ENCODE measurements at regions of chr1 and their contacts with region 1.

Region 1: GRCh38 chr1:241531195-241532161 is 700 bp upstream of the KMO start:
- DNase-seq: no peak
- ATAC-seq: peak in 3 of 4 donors; percentile 68 to 87 (median 71)
- H3K4me3 ChIP-seq: peak overlapping the region; percentile 15 to 60 (median 48)
- H3K27ac ChIP-seq: peak overlapping the region in 4 of 12 donors; percentile 9 to 89 (median 38)
- H3K4me1 ChIP-seq: peaks cover 0 to 7% (median 0%) of the 10 kb centered on the region in 12 donors
- H3K27me3 ChIP-seq: peaks cover 0 to 24% (median 0%) of the 10 kb centered on the region in 9 donors
- CTCF ChIP-seq: peak; percentile 45 to 68 (median 62)
- POLR2A ChIP-seq: no peak

Region 2: GRCh38 chr1:241275981-241276380 is 255.5 kb before region 1 on chr1:
- intact Hi-C with region 1: no loop called
- DNase-seq: no peak
- ATAC-seq: no peak
- H3K4me3 ChIP-seq: no peak overlapping the region
- H3K27ac ChIP-seq: no peak overlapping the region
- H3K4me1 ChIP-seq: no peaks in the 10 kb centered on the region
- H3K27me3 ChIP-seq: no peaks in the 10 kb centered on the region
- CTCF ChIP-seq: no peak
- POLR2A ChIP-seq: no peak

Region 3: DNA sequence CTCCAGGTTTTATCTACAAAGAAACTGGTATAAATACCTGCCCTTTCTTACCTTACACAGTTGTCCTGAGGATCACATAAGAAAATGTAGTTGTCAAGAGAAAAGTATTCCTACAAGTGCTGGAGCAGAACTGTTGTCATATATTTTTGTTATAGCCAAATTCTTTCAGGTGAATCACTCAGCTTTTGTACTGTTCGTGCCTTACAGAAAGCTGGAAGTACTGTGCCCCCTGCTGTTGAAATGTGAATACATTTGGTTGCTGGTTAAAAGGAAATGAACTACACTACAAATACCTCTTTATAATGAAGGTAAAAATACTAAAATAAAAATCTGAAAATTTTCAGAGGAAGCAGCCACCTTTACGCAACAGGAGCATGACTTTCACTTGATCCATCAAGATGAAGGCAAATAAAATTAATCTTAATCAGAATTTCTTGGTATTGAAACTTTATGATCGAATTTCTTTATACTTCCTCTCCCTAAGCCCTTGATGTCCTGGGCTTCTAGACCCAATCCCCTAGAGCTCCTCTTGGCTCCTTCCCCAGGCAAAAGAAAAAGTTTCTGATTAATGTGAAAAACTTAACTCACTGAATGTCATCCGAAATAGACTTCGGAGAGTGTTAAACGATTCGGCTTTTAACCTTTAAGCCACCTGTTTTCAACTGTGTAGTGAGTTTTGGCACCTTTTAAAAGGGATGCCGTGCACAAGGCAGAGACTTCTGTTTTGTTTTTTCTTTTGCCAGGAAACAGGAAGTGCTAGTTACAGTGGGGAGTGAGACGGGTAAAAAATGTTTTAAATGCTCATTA is 96.2 kb after region 1 on chr1:
- intact Hi-C with region 1: loop called in 7 of 10 experiments (anchors 2 to 10 kb)
- DNase-seq: no peak
- ATAC-seq: no peak
- H3K4me3 ChIP-seq: no peak overlapping the region
- H3K27ac ChIP-seq: peak overlapping the region in 1 of 12 donors; percentile 21
- H3K4me1 ChIP-seq: peaks cover 0 to 13% (median 4%) of the 10 kb centered on the region in 12 donors
- H3K27me3 ChIP-seq: no peaks in the 10 kb centered on the region
- CTCF ChIP-seq: peak; percentile 28 to 61 (median 45)
- POLR2A ChIP-seq: no peak

Region 4: GRCh38 chr1:241640029-241640818 is 108.7 kb after region 1 on chr1 and contains the starts of genes CHML and OPN3:
- intact Hi-C with region 1: loop called in 1 of 10 experiments (anchors 5 kb)
- DNase-seq: peak; percentile 95 to 98 (median 96)
- ATAC-seq: peak; percentile 99 to 100 (median 100)
- H3K4me3 ChIP-seq: peak within 1 kb of the TSS; percentile 73 to 98 (median 90)
- H3K27ac ChIP-seq: peak within 1 kb of the TSS; percentile 17 to 86 (median 78)
- H3K4me1 ChIP-seq: peaks cover 0 to 35% (median 10%) of the 10 kb centered on the region in 12 donors
- H3K27me3 ChIP-seq: no peaks in the 10 kb centered on the region
- CTCF ChIP-seq: no peak
- POLR2A ChIP-seq: peak; percentile 15 to 72
- total RNA-seq, gene CHML: 3.9 to 9.8 (median 6.6) TPM
- total RNA-seq, gene OPN3: 3.5 to 13.6 (median 6.2) TPM

Region 5: GRCh38 chr1:241834733-241835377 is 303.4 kb after region 1 on chr1:
- intact Hi-C with region 1: loop called in 6 of 10 experiments (anchors 10 kb)
- DNase-seq: no peak
- ATAC-seq: no peak
- H3K4me3 ChIP-seq: no peak overlapping the region
- H3K27ac ChIP-seq: no peak overlapping the region
- H3K4me1 ChIP-seq: peaks cover 0 to 4% (median 0%) of the 10 kb centered on the region in 12 donors
- H3K27me3 ChIP-seq: peaks cover 0 to 8% (median 0%) of the 10 kb centered on the region in 9 donors
- CTCF ChIP-seq: peak in 11 of 12 donors; percentile 25 to 62 (median 41)
- POLR2A ChIP-seq: no peak

Region 6: DNA sequence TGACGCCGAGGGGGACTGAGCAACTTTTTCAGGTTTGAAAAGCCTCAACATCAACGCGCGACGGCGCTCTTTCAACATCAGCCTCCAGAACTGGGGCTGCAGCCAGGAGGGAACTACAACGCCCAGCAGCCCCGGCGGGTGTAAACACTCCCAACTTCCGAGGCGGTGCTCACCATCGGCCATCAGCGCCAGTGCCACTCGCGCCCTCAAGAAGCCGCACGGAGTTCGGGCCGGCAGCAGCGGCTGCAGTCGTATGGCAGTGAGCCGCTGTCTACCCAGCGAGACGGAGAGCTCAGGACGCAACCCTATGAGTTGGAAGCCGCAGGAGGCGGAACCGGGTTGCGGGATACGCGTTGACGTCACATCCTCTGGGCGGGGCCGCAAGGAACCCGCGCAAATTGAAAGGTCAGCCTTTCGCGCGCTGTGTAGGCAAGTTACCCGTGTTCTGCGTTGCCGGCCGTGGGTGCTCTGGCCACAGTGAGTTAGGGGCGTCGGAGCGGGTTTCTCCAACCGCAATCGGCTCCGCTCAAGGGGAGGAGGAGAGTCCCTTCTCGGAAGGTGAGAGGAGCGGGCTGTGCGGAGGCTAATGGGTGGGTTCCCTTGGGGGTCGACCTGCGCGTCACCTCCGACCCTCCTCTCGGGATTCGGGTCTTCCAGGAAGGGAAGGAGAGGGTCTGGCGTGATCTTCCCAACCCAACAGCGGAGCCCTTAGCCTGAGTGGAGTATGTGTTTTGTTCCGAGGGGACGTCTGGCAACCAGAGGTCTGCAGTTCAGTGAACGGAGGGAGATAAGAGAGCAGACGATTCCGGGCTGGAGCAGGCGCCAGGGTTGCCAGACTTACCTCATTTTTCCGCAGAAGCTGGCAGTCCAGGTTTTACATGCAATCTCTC is 316.6 kb after region 1 on chr1 and contains the start of gene EXO1:
- intact Hi-C with region 1: loop called in 3 of 10 experiments (anchors 10 kb)
- DNase-seq: peak; percentile 87 to 92 (median 89)
- ATAC-seq: peak; percentile 97 to 99 (median 99)
- H3K4me3 ChIP-seq: peak within 1 kb of the TSS; percentile 25 to 97 (median 84)
- H3K27ac ChIP-seq: peak within 1 kb of the TSS; percentile 89 to 100 (median 96)
- H3K4me1 ChIP-seq: peaks cover 0 to 14% (median 10%) of the 10 kb centered on the region in 12 donors
- H3K27me3 ChIP-seq: no peaks in the 10 kb centered on the region
- CTCF ChIP-seq: peak in 9 of 12 donors; percentile 14 to 56 (median 41)
- POLR2A ChIP-seq: peak in 1 of 2 donors; percentile 41
- total RNA-seq, gene EXO1: 0.15 to 4.1 (median 0.81) TPM in 5 of 9 donors, not detected in the others

Region 7: DNA sequence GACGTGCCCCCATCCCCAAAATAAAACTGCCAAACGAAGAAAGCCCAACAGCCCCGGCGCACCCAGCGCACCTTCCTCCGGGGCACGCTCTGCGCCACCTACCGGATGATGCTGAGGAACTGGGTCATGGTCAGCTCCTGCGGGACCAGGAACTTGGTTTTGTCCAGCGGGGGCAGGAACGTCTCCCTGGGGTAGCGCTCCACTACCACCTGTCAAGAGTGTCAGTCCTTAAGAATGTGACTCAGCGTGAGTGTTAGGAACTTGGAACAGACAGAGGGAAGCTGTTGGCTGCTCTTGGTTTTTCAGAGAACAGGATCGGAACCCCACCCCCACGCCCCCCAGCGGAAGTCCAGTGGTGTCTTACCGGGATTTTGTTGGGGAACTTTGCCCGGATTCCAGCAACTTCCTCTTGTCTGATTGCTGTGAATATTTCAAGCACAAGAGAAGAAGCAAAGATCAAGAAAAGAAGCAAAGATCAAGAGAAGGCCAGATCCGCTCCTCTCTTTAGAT is 467.0 kb after region 1 on chr1:
- intact Hi-C with region 1: loop called in 2 of 10 experiments (anchors 10 kb)
- DNase-seq: peak; percentile 67 to 83 (median 74)
- ATAC-seq: peak; percentile 43 to 93 (median 84)
- H3K4me3 ChIP-seq: peak overlapping the region in 10 of 12 donors; percentile 7 to 53 (median 35)
- H3K27ac ChIP-seq: peak overlapping the region in 6 of 12 donors; percentile 17 to 54 (median 46)
- H3K4me1 ChIP-seq: peaks cover 0 to 10% (median 0%) of the 10 kb centered on the region in 12 donors
- H3K27me3 ChIP-seq: no peaks in the 10 kb centered on the region
- CTCF ChIP-seq: peak; percentile 35 to 80 (median 61)
- POLR2A ChIP-seq: no peak